OCI-LY7 (cell line): ENCODE measurements at regions of chr12 and their contacts with region 1.

Region 1: DNA sequence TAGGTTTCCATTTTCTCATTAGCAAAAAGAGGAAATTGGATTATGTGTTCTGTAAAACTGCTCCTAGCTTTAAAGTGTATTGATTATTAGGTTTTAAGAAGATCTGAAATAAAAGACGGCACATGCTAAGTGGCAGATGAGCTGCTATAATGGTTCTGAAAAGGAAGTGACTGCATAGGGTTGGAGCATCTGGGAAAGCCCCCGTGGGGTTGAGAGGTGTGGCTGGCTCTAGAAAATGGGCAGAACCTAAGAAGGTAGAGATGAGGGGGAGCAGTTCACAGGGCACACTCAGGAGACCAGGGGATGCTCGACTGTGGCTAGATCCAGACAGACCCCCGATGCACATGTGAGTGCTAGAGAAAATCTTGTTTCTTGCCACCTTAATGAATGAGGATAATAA is 1.9 kb downstream of the IFNG-AS1 start:
- DNase-seq: peak; percentile 77
- H3K4me3 ChIP-seq: peak overlapping the region; percentile 78
- H3K27ac ChIP-seq: peak overlapping the region; percentile 97
- H3K4me1 ChIP-seq: peaks cover 63% of the 10 kb centered on the region
- CTCF ChIP-seq: no peak

Region 2: DNA sequence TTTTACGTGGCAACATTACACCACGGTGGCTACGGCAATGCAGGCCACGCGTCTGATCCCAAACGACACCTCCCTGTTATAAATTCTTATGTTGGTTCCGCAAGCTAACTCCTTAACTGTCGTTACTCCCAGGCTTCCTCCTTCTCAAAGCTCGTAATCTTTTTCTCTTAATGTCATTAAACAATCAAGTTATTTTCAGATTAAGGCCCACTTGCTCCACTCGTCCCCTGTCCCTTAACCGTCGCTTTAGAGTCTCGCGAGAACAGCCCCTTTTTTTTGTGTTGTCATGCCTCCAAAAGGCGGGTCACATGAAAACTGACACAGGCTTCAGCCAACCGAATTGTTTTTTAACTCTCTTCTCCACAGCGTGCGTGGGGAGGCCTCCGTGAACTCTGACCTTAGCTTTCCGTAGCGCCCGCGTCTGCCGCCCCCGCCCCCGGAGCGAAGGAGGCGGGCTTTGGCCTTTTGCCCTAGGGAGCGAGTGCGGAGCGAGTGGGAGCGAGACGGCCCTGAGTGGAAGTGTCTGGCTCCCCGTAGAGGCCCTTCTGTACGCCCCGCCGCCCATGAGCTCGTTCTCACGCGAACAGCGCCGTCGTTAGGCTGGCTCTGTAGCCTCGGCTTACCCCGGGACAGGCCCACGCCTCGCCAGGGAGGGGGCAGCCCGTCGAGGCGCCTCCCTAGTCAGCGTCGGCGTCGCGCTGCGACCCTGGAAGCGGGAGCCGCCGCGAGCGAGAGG is 722.1 kb before region 1 on chr12 and contains the start of gene CAND1:
- CTCF ChIA-PET with region 1: no interaction called
- POLR2A ChIA-PET with region 1: interaction called, 11 read pairs
- intact Hi-C with region 1: loop called (anchors 2 kb)
- DNase-seq: peak; percentile 99
- H3K4me3 ChIP-seq: peak within 1 kb of the TSS; percentile 93
- H3K27ac ChIP-seq: peak within 1 kb of the TSS; percentile 87
- H3K4me1 ChIP-seq: peaks cover 33% of the 10 kb centered on the region
- CTCF ChIP-seq: 0 out of 2 replicates have a peak, but pooled peaks have one; percentile 12
- total RNA-seq, gene CAND1: 104 and 109 TPM in 2 replicates

Region 3: DNA sequence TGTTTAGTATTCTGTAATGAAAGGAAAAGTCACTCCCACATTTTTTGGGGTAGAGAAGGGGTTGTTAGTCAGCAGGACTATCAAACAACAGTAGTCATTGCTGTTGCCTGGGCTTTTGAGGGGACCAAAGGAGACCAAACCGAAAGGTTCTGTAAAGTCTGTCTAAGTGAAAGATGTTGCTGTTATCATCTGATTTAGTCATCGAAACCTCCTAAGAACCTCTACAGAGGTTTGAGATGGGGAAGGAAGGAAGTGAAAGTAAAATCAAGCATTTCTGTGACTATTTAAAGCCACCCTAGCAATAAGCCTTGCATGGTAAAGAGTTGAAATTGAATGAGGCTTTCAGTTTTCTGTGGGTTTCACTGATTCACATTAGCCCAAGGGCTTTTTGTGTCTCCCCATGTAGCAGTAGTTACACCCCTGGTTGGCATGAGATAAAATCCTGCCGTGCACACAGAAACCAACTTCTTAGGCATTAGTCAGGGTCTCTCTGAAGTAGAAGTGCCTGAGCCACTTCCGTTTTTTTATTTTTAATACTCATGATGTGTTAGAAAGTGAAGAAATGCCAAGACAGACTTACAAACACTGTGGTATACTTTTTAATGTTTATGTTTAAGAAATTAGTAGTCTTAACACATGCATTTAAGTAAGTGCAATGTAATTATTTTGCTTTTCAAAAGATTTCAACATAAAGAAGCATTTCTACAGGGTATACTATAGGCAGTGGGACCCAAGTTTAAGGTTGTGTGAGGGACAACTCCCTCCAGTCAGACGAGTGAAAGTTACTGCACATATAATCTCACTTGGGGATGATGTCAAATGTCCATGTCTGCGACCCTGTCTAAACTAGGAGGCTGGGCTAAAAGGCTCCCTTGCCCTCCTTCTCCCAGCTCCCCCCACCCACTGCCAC is 292.2 kb before region 1 on chr12:
- CTCF ChIA-PET with region 1: no interaction called
- POLR2A ChIA-PET with region 1: no interaction called
- intact Hi-C with region 1: loop called (anchors 5 kb)
- DNase-seq: peak; percentile 88
- H3K4me3 ChIP-seq: peak overlapping the region; percentile 59
- H3K27ac ChIP-seq: peak overlapping the region; percentile 83
- H3K4me1 ChIP-seq: peaks cover 72% of the 10 kb centered on the region
- CTCF ChIP-seq: no peak

Region 4: DNA sequence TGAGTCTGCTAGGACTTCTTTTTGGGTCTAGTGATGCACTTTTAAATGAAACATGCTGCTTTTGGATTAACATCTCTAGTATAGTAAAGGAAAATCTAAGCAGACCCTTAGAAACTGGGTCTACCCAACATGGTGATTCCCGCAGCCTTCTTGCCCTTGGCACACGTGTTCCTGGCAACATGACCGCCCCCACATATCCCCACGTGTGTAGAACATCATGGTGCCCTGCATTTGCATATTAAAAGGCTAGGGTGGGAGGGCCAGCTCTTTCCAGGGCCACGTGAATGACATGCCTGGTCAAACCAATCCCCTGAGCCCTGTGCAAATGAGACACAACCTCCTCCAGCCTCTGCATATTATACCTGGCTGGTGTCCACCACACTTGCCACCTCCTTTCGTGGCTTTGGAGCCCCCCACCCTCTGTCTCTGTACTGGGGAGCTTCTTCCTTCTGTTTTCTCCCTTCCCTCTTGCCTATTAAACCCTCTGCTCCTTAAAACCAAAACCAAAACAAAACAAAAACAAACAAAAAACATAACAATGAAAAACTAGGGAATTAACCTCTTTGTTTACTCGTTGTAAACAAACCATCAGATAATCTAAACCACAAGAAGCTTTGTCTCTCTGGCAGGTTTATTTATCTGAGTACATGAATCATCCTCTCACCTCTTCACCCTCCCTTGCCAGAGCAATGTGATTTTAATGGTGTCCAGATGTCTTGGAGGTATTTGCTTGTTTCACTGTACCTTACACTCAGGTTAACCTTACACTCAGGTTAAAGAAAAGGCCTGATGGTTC is 276.7 kb before region 1 on chr12:
- CTCF ChIA-PET with region 1: no interaction called
- POLR2A ChIA-PET with region 1: no interaction called
- intact Hi-C with region 1: no loop called
- DNase-seq: no peak
- H3K4me3 ChIP-seq: no peak overlapping the region
- H3K27ac ChIP-seq: no peak overlapping the region
- H3K4me1 ChIP-seq: no peaks in the 10 kb centered on the region
- CTCF ChIP-seq: no peak

Region 5: GRCh38 chr12:67910360-67911274 is 80.5 kb before region 1 on chr12:
- CTCF ChIA-PET with region 1: no interaction called
- POLR2A ChIA-PET with region 1: no interaction called
- intact Hi-C with region 1: no loop called
- DNase-seq: no peak
- H3K4me3 ChIP-seq: no peak overlapping the region
- H3K27ac ChIP-seq: no peak overlapping the region
- H3K4me1 ChIP-seq: no peaks in the 10 kb centered on the region
- CTCF ChIP-seq: no peak

Region 6: DNA sequence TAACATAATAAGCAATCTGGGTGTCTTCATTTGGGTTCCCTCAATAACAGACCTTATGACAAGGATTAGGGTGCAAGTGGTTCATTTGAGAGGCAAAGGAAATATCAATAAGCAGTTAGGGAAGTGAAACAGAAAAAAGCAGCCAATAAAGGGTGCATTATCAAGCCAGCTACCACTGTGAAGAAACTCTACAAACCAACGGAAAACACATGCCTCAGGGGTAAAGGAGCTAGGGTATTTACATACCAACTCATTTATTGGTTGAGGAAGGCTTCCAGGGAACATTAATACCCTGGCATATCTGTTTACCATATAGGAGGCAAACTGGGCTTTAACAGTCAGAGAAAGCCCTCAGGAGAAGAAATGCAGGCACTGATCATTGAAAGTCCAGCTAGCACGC is 24.6 kb before region 1 on chr12:
- CTCF ChIA-PET with region 1: no interaction called
- POLR2A ChIA-PET with region 1: interaction called, 11 read pairs
- intact Hi-C with region 1: no loop called
- DNase-seq: peak; percentile 53
- H3K4me3 ChIP-seq: no peak overlapping the region
- H3K27ac ChIP-seq: peak overlapping the region; percentile 23
- H3K4me1 ChIP-seq: peaks cover 25% of the 10 kb centered on the region
- CTCF ChIP-seq: no peak

Region 7: DNA sequence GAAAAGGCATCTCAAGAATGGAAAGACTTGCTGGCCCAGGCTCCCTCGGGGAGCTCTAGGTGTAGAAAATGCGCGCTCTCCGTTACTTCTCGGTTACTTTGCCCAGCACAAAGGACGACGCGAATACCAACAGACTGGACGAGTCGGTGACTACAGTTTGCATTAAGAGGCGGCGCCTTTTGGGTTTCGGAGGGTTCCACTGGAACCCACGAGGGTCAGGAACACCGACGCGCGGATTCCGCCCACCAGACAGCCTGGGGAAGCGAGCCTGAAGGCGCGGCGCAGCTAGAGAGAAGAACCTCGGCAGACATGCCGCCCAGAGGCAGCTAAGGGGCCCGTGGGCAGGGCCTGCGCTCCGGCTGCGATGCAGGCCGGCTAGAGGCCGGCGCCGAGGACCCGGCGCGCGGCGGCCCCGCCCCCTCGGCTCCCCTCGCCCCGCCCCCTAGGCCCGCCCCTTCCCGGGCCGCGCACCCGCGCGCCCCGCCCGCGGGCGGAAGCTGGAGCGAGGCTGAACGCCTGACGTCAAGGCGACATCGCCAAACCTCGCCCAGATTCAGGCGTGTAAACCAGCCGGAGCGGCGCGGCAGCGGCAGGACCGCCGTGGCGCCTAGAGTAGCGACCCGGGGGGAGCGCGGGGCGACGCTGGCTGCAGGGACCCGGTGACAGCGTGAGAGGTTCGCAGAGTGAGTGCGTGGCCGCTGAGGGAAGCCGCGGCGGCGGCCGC is 619.4 kb after region 1 on chr12 and contains the start of gene RAP1B:
- CTCF ChIA-PET with region 1: no interaction called
- POLR2A ChIA-PET with region 1: no interaction called
- intact Hi-C with region 1: loop called (anchors 5 kb)
- DNase-seq: peak; percentile 95
- H3K4me3 ChIP-seq: peak within 1 kb of the TSS; percentile 95
- H3K27ac ChIP-seq: peak within 1 kb of the TSS; percentile 88
- H3K4me1 ChIP-seq: peaks cover 35% of the 10 kb centered on the region
- CTCF ChIP-seq: no peak
- total RNA-seq, gene RAP1B: 100 and 101 TPM in 2 replicates